ENCODE measurements at regions of chr6 and their contacts with region 1.

Region 1: GRCh38 chr6:75210885-75211739 is 5.3 kb upstream of the COL12A1 start:
- DNase-seq: peak in 1 of 2 donors; percentile 77
- H3K4me3 ChIP-seq: no peak overlapping the region
- H3K27ac ChIP-seq: no peak overlapping the region
- H3K4me1 ChIP-seq: peaks cover 0 to 12% of the 10 kb centered on the region in 2 donors
- H3K27me3 ChIP-seq: no peaks in the 10 kb centered on the region
- CTCF ChIP-seq: peak; percentile 65 to 79 (median 72)
- POLR2A ChIP-seq: no peak

Region 2: DNA sequence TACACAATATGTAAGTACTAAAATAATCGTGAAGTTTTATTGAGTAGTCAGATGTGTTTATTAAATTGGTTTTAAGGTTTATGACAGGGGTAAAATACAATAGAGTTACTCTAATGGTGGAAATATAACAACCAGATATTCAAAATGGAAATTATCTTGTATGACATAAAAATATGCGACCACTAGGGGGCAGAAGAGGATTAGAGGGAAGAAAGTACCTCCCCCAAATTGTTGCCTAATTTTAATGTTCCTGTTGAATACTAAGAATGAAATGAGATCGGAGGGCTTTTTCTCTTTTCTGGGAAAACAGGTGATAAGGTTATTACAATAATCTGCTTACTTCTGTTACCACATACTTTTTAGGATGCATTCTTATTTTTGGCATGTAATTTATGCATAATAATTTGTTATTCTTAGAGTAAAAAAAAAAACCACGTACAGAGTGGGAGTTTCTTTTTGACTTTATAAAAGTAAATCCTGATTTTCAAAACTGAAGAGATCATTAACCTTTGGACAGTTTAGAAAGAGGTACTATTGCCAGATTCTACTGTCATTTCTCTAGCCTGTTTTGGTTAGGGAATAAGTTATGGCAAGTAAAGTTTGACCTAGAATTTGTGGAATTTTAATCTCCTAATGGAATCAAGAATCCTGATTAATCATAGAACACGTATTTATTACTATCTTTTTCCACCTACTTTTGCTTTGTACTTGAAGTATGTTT is 1356.0 kb before region 1 on chr6:
- intact Hi-C with region 1: loop called (anchors 10 kb)
- DNase-seq: peak in 1 of 2 donors; percentile 44
- H3K4me3 ChIP-seq: peak overlapping the region in 1 of 2 donors; percentile 10
- H3K27ac ChIP-seq: peak overlapping the region; percentile 55 to 76
- H3K4me1 ChIP-seq: no peaks in the 10 kb centered on the region
- H3K27me3 ChIP-seq: no peaks in the 10 kb centered on the region
- CTCF ChIP-seq: peak; percentile 61 to 89 (median 79)
- POLR2A ChIP-seq: no peak

Region 3: GRCh38 chr6:74091136-74091793 is 1119.8 kb before region 1 on chr6:
- intact Hi-C with region 1: loop called (anchors 10 kb)
- DNase-seq: peak in 1 of 2 donors; percentile 57
- H3K4me3 ChIP-seq: no peak overlapping the region
- H3K27ac ChIP-seq: peak overlapping the region in 1 of 2 donors; percentile 31
- H3K4me1 ChIP-seq: no peaks in the 10 kb centered on the region
- H3K27me3 ChIP-seq: no peaks in the 10 kb centered on the region
- CTCF ChIP-seq: peak; percentile 38 to 66 (median 53)
- POLR2A ChIP-seq: no peak